Activated CD8-positive, alpha-beta T cell treated with anti-CD3 and anti-CD28 coated beads, Interleukin-2, amount 10 ng/mL, durations not matched to agents 7 days and 5 days (primary cell): ENCODE measurements at regions of chr9 and their contacts with region 1.

Region 1: GRCh38 chr9:75200892-75201470 is 112.7 kb downstream of the OSTF1 start:
- DNase-seq: peak; percentile 31
- ATAC-seq: no peak
- H3K4me3 Mint-ChIP-seq: no peak overlapping the region
- H3K27ac Mint-ChIP-seq: no peak overlapping the region
- H3K4me1 Mint-ChIP-seq: no peaks in the 10 kb centered on the region
- H3K27me3 Mint-ChIP-seq: peaks cover 2% of the 10 kb centered on the region

Region 2: GRCh38 chr9:75238311-75238978 is 37.5 kb after region 1 on chr9:
- CTCF ChIA-PET with region 1: interaction called, 34 read pairs
- POLR2A ChIA-PET with region 1: no interaction called
- DNase-seq: peak; percentile 70
- ATAC-seq: peak; percentile 90
- H3K4me3 Mint-ChIP-seq: no peak overlapping the region
- H3K27ac Mint-ChIP-seq: no peak overlapping the region
- H3K4me1 Mint-ChIP-seq: no peaks in the 10 kb centered on the region
- H3K27me3 Mint-ChIP-seq: peaks cover 2% of the 10 kb centered on the region

Region 3: DNA sequence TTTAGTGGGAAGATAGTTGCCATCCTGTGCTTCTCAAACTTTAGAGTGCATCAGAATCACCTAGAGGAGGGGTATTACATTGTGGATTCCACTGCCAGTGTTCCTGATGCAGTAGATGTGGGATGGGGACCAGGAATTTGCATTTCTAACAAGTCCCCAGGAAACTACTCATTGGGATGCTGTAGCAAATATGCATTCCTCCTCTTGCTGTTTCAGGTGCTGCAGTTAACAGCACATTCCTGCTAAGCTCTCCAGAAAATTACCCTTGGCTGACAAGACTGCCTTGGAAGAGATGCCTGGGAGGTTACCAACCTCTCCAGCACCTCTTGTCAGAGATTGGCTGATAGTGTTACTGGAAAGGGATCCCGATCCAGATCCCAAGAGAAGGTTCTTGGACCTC is 157.9 kb after region 1 on chr9:
- CTCF ChIA-PET with region 1: no interaction called
- POLR2A ChIA-PET with region 1: no interaction called
- DNase-seq: no peak
- ATAC-seq: no peak
- H3K4me3 Mint-ChIP-seq: no peak overlapping the region
- H3K27ac Mint-ChIP-seq: no peak overlapping the region
- H3K4me1 Mint-ChIP-seq: no peaks in the 10 kb centered on the region
- H3K27me3 Mint-ChIP-seq: no peaks in the 10 kb centered on the region